CD8-positive, alpha-beta T cell (primary cell): ENCODE measurements at regions of chr10 and their contacts with region 1.

Region 1: GRCh38 chr10:7417103-7417623 is 6.3 kb upstream of the SFMBT2 start:
- DNase-seq: peak in 2 of 9 experiments; percentile 70 to 77
- ATAC-seq: peak; percentile 55
- H3K4me3 ChIP-seq: no peak overlapping the region
- H3K4me3 Mint-ChIP-seq: no peak overlapping the region
- H3K27ac ChIP-seq: no peak overlapping the region
- H3K27ac Mint-ChIP-seq: no peak overlapping the region
- H3K4me1 ChIP-seq: peaks cover 7% of the 10 kb centered on the region
- H3K4me1 Mint-ChIP-seq: peaks cover 20% of the 10 kb centered on the region
- H3K27me3 ChIP-seq: peaks cover 0 to 4% of the 10 kb centered on the region in 2 experiments
- H3K27me3 Mint-ChIP-seq: no peaks in the 10 kb centered on the region
- CTCF ChIP-seq: peak; percentile 81

Region 2: DNA sequence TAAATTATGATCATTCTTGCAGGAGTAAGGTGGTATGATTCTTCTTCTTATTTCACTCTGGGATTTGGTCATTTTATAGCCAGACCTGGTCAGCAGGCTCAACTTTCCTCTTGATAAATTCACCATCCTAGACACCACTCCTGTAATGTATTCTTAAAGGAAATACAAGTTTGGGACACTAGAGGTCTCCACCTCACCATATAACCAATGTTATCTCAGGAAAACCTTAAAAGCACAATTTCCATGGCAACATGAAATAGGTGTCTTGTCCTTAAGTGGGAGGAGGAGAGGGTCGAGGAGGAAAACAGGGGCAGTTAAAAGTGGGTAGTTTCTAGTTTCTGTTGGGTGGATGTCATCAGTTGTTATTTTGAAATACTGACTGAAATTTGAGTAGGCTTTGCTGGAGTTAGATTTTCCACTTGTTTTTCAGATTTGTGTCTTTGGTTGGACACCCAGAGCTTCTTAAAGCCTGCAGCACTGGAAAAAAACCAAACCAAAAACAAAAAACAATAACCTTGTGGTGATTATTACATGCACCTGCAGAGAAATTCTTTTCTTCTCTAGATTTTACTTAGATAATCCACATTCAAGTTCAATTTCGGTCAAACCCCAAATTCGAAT is 1000.2 kb before region 1 on chr10:
- CTCF ChIA-PET with region 1: no interaction called
- POLR2A ChIA-PET with region 1: no interaction called
- intact Hi-C with region 1: loop called (anchors 5 to 10 kb)
- DNase-seq: peak in 2 of 9 experiments; percentile 65 to 75
- ATAC-seq: peak; percentile 72
- H3K4me3 ChIP-seq: no peak overlapping the region
- H3K4me3 Mint-ChIP-seq: no peak overlapping the region
- H3K27ac ChIP-seq: no peak overlapping the region
- H3K27ac Mint-ChIP-seq: no peak overlapping the region
- H3K4me1 ChIP-seq: no peaks in the 10 kb centered on the region
- H3K4me1 Mint-ChIP-seq: no peaks in the 10 kb centered on the region
- H3K27me3 ChIP-seq: no peaks in the 10 kb centered on the region
- H3K27me3 Mint-ChIP-seq: no peaks in the 10 kb centered on the region
- CTCF ChIP-seq: peak; percentile 74

Region 3: DNA sequence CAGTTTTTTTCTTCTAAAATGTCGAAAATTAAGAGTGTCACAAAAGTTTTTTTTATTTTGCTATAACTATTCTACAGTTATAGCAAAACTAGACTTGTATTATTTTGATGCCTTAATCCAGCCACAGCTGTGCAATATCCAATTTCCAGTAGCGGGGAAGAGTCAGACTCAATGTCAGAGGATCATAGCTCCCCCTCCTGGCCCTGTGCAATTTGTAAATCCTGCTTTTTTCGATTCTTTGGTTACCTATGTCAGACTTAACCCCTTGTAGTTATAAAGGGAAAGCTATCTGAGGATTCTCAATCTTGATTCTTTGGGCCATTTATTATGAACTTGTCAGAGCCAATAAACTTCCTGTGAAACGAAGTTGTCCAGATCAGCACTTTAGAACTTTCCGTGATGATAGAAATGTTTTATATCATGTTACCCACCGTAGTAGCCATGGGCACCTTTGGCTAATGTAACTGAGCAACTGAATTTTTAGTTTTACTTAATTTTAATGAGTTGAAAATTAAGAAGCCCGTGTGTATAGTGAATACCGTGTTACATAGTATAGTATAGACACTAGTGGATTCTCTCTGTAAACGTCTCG is 749.4 kb before region 1 on chr10:
- CTCF ChIA-PET with region 1: no interaction called
- POLR2A ChIA-PET with region 1: no interaction called
- intact Hi-C with region 1: loop called in 1 of 2 experiments (anchors 1 kb)
- DNase-seq: peak in 3 of 9 experiments; percentile 36 to 56 (median 40)
- ATAC-seq: no peak
- H3K4me3 ChIP-seq: no peak overlapping the region
- H3K4me3 Mint-ChIP-seq: no peak overlapping the region
- H3K27ac ChIP-seq: no peak overlapping the region
- H3K27ac Mint-ChIP-seq: no peak overlapping the region
- H3K4me1 ChIP-seq: peaks cover 13% of the 10 kb centered on the region
- H3K4me1 Mint-ChIP-seq: peaks cover 18% of the 10 kb centered on the region
- H3K27me3 ChIP-seq: no peaks in the 10 kb centered on the region
- H3K27me3 Mint-ChIP-seq: no peaks in the 10 kb centered on the region
- CTCF ChIP-seq: peak; percentile 44

Region 4: DNA sequence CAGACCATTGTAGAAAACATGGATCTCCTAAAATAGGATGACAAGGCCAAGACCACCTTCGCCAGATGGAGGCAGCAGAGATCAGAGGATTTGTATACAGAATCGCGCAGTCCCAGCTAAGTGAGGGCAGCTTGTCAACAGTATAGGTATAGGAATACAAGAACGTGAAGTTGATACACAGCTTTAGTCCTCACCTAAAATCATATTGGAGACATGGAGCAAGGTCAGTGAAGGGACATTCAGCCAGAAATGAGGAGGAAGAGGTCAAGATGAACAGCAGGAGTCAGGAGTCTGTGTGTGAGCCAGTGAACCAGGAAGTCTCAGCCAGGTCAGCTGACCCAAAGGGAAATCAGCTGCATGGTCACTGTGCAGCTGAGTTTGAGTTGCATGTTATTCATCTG is 573.7 kb before region 1 on chr10:
- CTCF ChIA-PET with region 1: no interaction called
- POLR2A ChIA-PET with region 1: no interaction called
- intact Hi-C with region 1: loop called in 1 of 2 experiments (anchors 5 kb)
- DNase-seq: peak in 2 of 9 experiments; percentile 29 to 33
- ATAC-seq: no peak
- H3K4me3 ChIP-seq: no peak overlapping the region
- H3K4me3 Mint-ChIP-seq: no peak overlapping the region
- H3K27ac ChIP-seq: no peak overlapping the region
- H3K27ac Mint-ChIP-seq: no peak overlapping the region
- H3K4me1 ChIP-seq: no peaks in the 10 kb centered on the region
- H3K4me1 Mint-ChIP-seq: no peaks in the 10 kb centered on the region
- H3K27me3 ChIP-seq: no peaks in the 10 kb centered on the region
- H3K27me3 Mint-ChIP-seq: peaks cover 4% of the 10 kb centered on the region
- CTCF ChIP-seq: no peak

Region 5: GRCh38 chr10:7121154-7121810 is 295.9 kb before region 1 on chr10:
- CTCF ChIA-PET with region 1: interaction called, 23 read pairs
- POLR2A ChIA-PET with region 1: no interaction called
- intact Hi-C with region 1: loop called in 1 of 2 experiments (anchors 1 kb)
- DNase-seq: peak; percentile 57 to 91 (median 78)
- ATAC-seq: peak; percentile 95
- H3K4me3 ChIP-seq: no peak overlapping the region
- H3K4me3 Mint-ChIP-seq: no peak overlapping the region
- H3K27ac ChIP-seq: no peak overlapping the region
- H3K27ac Mint-ChIP-seq: peak overlapping the region; percentile 69
- H3K4me1 ChIP-seq: peaks cover 4% of the 10 kb centered on the region
- H3K4me1 Mint-ChIP-seq: peaks cover 6% of the 10 kb centered on the region
- H3K27me3 ChIP-seq: no peaks in the 10 kb centered on the region
- H3K27me3 Mint-ChIP-seq: no peaks in the 10 kb centered on the region
- CTCF ChIP-seq: peak; percentile 61

Region 6: DNA sequence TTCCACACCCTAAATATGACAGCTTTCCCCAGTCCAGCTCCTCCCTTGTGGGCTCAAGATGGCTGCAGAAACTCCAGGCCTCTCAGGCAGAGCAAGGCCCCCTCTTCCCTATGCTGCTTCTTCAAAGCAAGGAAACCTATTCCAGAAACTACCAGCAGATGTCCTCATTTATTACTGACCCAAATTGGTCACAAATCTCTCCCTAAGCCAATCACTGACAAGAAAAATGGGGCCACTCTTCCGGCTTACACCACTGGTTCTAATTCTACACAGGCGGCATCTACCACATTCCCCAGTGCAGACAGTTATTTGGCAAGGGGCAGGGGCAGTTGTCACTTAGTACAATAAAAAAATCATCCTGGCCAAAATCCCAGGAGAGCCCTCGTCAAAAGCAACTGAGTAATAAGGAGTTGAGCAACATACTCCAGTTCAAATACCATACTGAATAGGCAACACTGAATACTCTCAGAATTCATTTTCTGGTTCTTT is 156.7 kb before region 1 on chr10:
- CTCF ChIA-PET with region 1: interaction called, 10 read pairs
- POLR2A ChIA-PET with region 1: no interaction called
- intact Hi-C with region 1: loop called (anchors 1 to 2 kb)
- DNase-seq: peak in 2 of 9 experiments; percentile 67 to 74
- ATAC-seq: no peak
- H3K4me3 ChIP-seq: no peak overlapping the region
- H3K4me3 Mint-ChIP-seq: no peak overlapping the region
- H3K27ac ChIP-seq: no peak overlapping the region
- H3K27ac Mint-ChIP-seq: peak overlapping the region; percentile 73
- H3K4me1 ChIP-seq: peaks cover 48% of the 10 kb centered on the region
- H3K4me1 Mint-ChIP-seq: peaks cover 52% of the 10 kb centered on the region
- H3K27me3 ChIP-seq: no peaks in the 10 kb centered on the region
- H3K27me3 Mint-ChIP-seq: no peaks in the 10 kb centered on the region
- CTCF ChIP-seq: no peak

Region 7: GRCh38 chr10:7484456-7485243 is 67.5 kb after region 1 on chr10:
- CTCF ChIA-PET with region 1: interaction called, 7 read pairs
- POLR2A ChIA-PET with region 1: interaction called, 14 read pairs
- intact Hi-C with region 1: loop called in 1 of 2 experiments (anchors 5 kb)
- DNase-seq: peak; percentile 39 to 92 (median 66)
- ATAC-seq: peak; percentile 79
- H3K4me3 ChIP-seq: peak overlapping the region; percentile 16 to 40
- H3K4me3 Mint-ChIP-seq: peak overlapping the region; percentile 69
- H3K27ac ChIP-seq: peak overlapping the region; percentile 67 to 83
- H3K27ac Mint-ChIP-seq: peak overlapping the region; percentile 94
- H3K4me1 ChIP-seq: peaks cover 80% of the 10 kb centered on the region
- H3K4me1 Mint-ChIP-seq: peaks cover 89% of the 10 kb centered on the region
- H3K27me3 ChIP-seq: no peaks in the 10 kb centered on the region
- H3K27me3 Mint-ChIP-seq: no peaks in the 10 kb centered on the region
- CTCF ChIP-seq: no peak